ENCODE measurements at regions of chr1 and their contacts with region 1.

Region 1: GRCh38 chr1:174968750-174969244 is 30.9 kb upstream of the CACYBP start:
- DNase-seq: peak in 9 of 14 experiments; percentile 7 to 90 (median 28)
- ATAC-seq: peak; percentile 43
- H3K4me3 ChIP-seq: peak overlapping the region; percentile 26
- H3K4me3 Mint-ChIP-seq: peak overlapping the region; percentile 59
- H3K27ac ChIP-seq: peak overlapping the region; percentile 76 to 88
- H3K27ac Mint-ChIP-seq: peak overlapping the region; percentile 95
- H3K4me1 ChIP-seq: peaks cover 50% of the 10 kb centered on the region
- H3K4me1 Mint-ChIP-seq: peaks cover 71% of the 10 kb centered on the region
- H3K27me3 ChIP-seq: no peaks in the 10 kb centered on the region
- H3K27me3 Mint-ChIP-seq: no peaks in the 10 kb centered on the region
- CTCF ChIP-seq: no peak

Region 2: DNA sequence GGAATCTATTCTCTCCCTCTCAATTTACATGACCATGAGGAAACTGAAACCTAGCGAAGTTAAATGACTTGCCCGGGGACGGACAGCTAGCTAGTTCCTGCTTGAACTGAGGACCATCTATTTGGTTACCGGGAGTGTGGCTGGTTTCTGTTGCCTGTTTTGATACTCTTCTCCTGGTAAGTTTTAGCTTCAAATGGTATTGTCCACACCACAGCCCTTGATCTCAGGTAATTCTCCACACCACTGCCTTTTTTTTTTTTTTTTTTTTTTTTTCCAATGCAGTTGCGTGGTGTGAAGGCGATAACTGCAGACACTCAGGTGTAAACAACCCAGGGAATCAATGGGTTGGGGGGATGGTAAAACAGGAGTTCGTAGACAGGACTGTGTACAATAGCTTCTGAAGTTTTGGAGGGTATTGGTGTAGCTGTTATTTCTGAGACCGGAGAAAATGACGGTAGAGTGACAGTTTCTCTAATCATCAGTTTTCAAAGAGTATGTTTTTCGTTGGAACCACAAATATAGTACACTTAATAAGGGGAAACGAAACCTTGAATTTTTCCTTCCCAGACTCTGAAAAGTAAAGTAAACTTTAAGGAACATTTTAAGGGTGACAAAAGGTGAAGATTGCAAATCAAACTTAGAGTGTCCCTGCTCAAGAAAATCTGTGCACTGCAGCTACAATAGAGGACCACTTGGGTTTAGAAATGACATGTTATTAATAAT is 94.3 kb before region 1 on chr1:
- CTCF ChIA-PET with region 1: no interaction called
- POLR2A ChIA-PET with region 1: interaction called, 13 read pairs
- intact Hi-C with region 1: loop called in 1 of 2 experiments (anchors 5 kb)
- DNase-seq: peak in 3 of 14 experiments; percentile 15 to 22 (median 19)
- ATAC-seq: no peak
- H3K4me3 ChIP-seq: peak overlapping the region; percentile 46
- H3K4me3 Mint-ChIP-seq: peak overlapping the region; percentile 89
- H3K27ac ChIP-seq: no peak overlapping the region
- H3K27ac Mint-ChIP-seq: peak overlapping the region; percentile 78
- H3K4me1 ChIP-seq: peaks cover 3% of the 10 kb centered on the region
- H3K4me1 Mint-ChIP-seq: peaks cover 35% of the 10 kb centered on the region
- H3K27me3 ChIP-seq: no peaks in the 10 kb centered on the region
- H3K27me3 Mint-ChIP-seq: no peaks in the 10 kb centered on the region
- CTCF ChIP-seq: no peak

Region 3: DNA sequence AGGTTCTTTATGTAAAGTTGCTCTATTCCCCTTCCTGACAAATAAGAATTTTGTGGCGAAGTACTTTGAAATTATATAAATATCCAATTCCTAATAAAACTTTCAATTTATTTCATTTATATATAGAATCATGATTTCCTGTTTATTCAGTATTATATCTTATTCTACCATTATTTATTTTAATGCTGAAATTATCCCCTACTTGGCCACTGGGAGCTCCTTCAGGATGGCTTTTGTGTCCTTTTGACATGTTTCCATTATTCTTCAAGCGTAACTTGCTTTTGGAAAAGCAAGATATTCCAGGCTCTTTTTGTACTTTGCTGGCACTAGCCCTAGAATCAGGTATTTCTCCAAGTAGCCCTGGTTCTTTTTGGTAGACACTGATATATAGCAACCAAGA is 36.2 kb before region 1 on chr1:
- CTCF ChIA-PET with region 1: no interaction called
- POLR2A ChIA-PET with region 1: interaction called, 4 read pairs
- intact Hi-C with region 1: loop called in 1 of 2 experiments (anchors 5 kb)
- DNase-seq: no peak
- ATAC-seq: no peak
- H3K4me3 ChIP-seq: no peak overlapping the region
- H3K4me3 Mint-ChIP-seq: no peak overlapping the region
- H3K27ac ChIP-seq: no peak overlapping the region
- H3K27ac Mint-ChIP-seq: no peak overlapping the region
- H3K4me1 ChIP-seq: no peaks in the 10 kb centered on the region
- H3K4me1 Mint-ChIP-seq: no peaks in the 10 kb centered on the region
- H3K27me3 ChIP-seq: no peaks in the 10 kb centered on the region
- H3K27me3 Mint-ChIP-seq: no peaks in the 10 kb centered on the region
- CTCF ChIP-seq: no peak

Region 4: GRCh38 chr1:174982971-174983689 is 14.3 kb after region 1 on chr1:
- CTCF ChIA-PET with region 1: interaction called, 22 read pairs
- POLR2A ChIA-PET with region 1: interaction called, 31 read pairs
- intact Hi-C with region 1: loop called (anchors 1 to 2 kb)
- DNase-seq: peak in 8 of 14 experiments; percentile 25 to 81 (median 52)
- ATAC-seq: peak; percentile 41
- H3K4me3 ChIP-seq: no peak overlapping the region
- H3K4me3 Mint-ChIP-seq: no peak overlapping the region
- H3K27ac ChIP-seq: no peak overlapping the region
- H3K27ac Mint-ChIP-seq: peak overlapping the region; percentile 75
- H3K4me1 ChIP-seq: peaks cover 3% of the 10 kb centered on the region
- H3K4me1 Mint-ChIP-seq: peaks cover 45% of the 10 kb centered on the region
- H3K27me3 ChIP-seq: no peaks in the 10 kb centered on the region
- H3K27me3 Mint-ChIP-seq: no peaks in the 10 kb centered on the region
- CTCF ChIP-seq: peak; percentile 78

Measured in CD4-positive, alpha-beta T cell (primary cell).